ENCODE measurements at regions of chr19 and their contacts with region 1.

Region 1: DNA sequence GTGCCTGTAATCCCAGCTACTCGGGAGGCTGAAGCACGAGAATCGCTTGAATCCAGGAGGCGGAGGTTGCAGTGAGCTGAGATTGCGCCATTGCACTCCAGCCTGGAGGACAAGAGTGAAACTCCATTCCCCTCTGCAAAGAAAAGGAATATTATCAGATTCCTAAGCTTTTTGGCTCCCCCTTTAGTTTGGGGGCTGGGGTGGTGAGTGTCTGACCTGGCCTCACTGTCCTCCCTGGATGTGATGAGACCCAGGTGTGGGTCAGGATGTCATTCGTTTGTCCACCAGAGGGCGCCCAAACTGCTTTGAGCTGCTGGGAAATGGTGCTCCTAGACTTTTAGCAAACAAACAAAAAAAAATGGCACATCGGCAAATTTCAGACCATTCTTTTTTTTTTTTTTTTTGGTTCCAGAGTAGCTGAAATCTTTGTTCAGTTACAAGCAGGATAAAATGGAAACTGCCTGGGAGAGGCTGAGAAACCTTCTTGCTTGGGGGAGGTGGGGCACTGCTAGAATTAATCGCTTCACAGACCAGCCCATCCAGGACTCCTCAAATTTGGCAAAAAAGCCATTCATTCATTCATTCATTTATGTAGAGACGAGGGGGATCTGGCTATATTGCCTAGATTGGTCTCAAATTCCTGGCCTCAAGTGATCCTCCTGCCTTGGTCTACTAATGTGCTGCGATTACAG is 29.4 kb downstream of the SPC24 start:
- DNase-seq: peak in 1 of 2 experiments; percentile 91
- H3K4me3 ChIP-seq: no peak overlapping the region
- H3K27ac ChIP-seq: 0 out of 2 replicates have a peak overlapping the region, but pooled peaks have one; percentile 22
- H3K4me1 ChIP-seq: no peaks in the 10 kb centered on the region
- H3K27me3 ChIP-seq: no peaks in the 10 kb centered on the region
- CTCF ChIP-seq: peak; percentile 75 to 83 (median 81)
- EP300 ChIP-seq: no peak
- POLR2A ChIP-seq: no peak
- RAD21 ChIP-seq: peak; percentile 48 to 56

Region 2: GRCh38 chr19:11050323-11051114 is 75.6 kb before region 1 on chr19:
- CTCF ChIA-PET with region 1: no interaction called
- POLR2A ChIA-PET with region 1: no interaction called
- DNase-seq: no peak
- H3K4me3 ChIP-seq: no peak overlapping the region
- H3K27ac ChIP-seq: no peak overlapping the region
- H3K4me1 ChIP-seq: no peaks in the 10 kb centered on the region
- H3K27me3 ChIP-seq: no peaks in the 10 kb centered on the region; a peak in 1 of 7 replicates
- CTCF ChIP-seq: no peak
- EP300 ChIP-seq: no peak
- POLR2A ChIP-seq: no peak
- RAD21 ChIP-seq: no peak

Region 3: GRCh38 chr19:11106477-11106876 is 19.7 kb before region 1 on chr19:
- CTCF ChIA-PET with region 1: interaction called, 21 read pairs
- POLR2A ChIA-PET with region 1: no interaction called
- DNase-seq: no peak
- H3K4me3 ChIP-seq: no peak overlapping the region
- H3K27ac ChIP-seq: no peak overlapping the region
- H3K4me1 ChIP-seq: peaks cover 0 to 3% (median 0%) of the 10 kb centered on the region in 4 experiments; a peak in 1 of 7 replicates
- H3K27me3 ChIP-seq: no peaks in the 10 kb centered on the region
- CTCF ChIP-seq: no peak
- EP300 ChIP-seq: no peak
- POLR2A ChIP-seq: no peak
- RAD21 ChIP-seq: no peak

Region 4: DNA sequence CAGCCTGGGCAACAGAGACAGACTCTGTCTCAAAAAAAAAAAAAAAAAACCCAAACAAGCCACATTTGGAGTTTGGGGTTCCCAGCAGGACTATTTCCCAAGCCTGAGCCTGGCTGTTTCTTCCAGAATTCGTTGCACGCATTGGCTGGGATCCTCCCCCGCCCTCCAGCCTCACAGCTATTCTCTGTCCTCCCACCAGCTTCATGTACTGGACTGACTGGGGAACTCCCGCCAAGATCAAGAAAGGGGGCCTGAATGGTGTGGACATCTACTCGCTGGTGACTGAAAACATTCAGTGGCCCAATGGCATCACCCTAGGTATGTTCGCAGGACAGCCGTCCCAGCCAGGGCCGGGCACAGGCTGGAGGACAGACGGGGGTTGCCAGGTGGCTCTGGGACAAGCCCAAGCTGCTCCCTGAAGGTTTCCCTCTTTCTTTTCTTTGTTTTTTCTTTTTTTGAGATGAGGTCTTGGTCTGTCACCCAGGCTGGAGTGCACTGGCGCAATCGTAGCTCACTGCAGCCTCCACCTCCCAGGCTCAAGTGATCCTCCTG is 10.2 kb before region 1 on chr19:
- CTCF ChIA-PET with region 1: interaction called, 21 read pairs
- POLR2A ChIA-PET with region 1: no interaction called
- DNase-seq: no peak
- H3K4me3 ChIP-seq: no peak overlapping the region
- H3K27ac ChIP-seq: no peak overlapping the region
- H3K4me1 ChIP-seq: no peaks in the 10 kb centered on the region
- H3K27me3 ChIP-seq: no peaks in the 10 kb centered on the region
- CTCF ChIP-seq: no peak
- EP300 ChIP-seq: no peak
- POLR2A ChIP-seq: no peak
- RAD21 ChIP-seq: no peak

Region 5: DNA sequence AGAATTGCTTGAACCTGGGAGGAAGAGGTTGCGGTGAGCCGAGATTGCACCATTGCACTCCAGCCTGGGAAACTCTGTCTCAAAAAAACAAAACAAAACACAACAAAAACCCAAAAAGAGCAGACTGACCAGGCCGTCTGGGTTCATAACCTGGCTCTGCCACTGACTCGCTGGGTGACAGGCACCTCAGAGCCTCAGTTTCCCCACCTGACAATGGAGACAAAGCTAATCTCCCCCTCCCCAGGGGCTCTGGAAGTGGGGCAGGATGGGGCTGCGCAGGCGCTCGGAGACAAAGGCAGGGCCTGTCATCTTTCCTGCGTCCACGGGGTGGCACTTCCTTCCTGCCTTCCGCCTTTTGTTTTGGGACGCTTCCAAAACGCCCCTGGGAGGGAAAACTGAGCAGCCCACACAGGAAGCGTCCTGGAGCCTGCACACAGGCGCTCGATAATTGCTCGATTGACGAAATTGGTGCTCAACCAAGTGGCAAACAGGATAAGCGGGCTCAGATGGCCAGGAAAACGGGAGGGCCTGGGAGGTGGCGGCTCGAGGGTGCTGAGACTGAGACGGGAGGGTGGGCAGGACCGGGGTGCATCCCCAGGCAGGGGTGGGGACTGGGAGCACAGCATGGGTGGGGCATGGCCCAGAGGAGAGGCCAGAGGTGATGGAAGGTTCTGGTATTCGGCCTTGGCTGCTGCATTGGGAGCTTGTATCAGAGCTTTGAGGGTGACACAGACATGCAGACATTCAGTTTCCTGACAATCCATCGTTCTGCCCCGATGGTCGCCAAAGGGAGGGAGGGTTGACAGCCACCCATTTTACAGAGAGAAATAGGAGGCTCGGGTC is 11.6 kb after region 1 on chr19:
- CTCF ChIA-PET with region 1: interaction called, 16 read pairs
- POLR2A ChIA-PET with region 1: interaction called, 4 read pairs
- DNase-seq: peak in 1 of 2 experiments; percentile 79
- H3K4me3 ChIP-seq: peak overlapping the region; percentile 9 to 57 (median 28); a peak in 6 of 8 replicates
- H3K27ac ChIP-seq: no peak overlapping the region
- H3K4me1 ChIP-seq: peaks cover 0 to 17% (median 13%) of the 10 kb centered on the region in 4 experiments; a peak in 6 of 7 replicates
- H3K27me3 ChIP-seq: no peaks in the 10 kb centered on the region
- CTCF ChIP-seq: peak; percentile 62 to 71 (median 69)
- EP300 ChIP-seq: no peak
- POLR2A ChIP-seq: no peak
- RAD21 ChIP-seq: peak; percentile 74 to 76

Region 6: DNA sequence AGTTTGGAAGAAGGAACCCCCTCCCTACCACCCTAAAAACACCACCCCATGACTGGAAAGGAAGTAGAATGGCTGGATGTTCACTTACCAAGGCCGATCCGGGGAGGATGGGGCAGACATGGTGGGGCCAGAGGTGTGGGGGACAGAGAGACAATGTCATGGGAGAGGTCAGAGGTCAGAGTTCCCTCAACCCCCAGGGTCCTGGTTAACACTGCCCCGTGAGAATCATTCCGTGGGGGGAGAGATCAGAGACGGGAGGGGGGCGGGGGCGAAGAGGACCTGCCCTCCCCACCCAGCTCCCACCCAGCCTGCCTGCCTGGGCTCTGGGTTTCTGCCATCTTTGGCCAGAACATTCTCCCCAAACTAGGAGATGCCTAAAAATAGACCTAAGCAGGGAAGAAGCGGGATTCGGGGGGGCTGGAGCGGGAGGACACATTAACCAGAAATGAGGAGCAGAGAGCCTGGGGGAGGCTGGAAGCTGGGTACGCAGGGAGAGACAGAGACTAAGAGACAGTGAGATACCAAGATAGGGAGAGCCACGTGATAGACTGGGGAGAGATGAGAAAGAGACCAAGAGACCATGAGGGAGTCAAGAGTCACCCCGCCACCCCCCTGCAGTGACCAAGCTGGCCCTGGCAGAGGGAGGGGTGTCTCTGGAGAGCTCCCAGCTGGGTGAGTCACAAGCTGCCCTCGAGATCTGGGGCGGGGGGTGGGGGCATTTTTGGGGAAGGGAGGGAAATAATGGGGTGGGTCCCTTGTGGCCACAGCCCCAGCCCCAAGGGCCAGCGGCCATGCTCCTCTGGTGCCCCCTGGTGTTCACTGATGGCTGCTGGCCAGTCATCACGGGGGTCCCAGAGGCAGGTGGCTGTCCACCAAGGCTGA is 77.3 kb after region 1 on chr19:
- CTCF ChIA-PET with region 1: interaction called, 18 read pairs
- POLR2A ChIA-PET with region 1: interaction called, 3 read pairs
- DNase-seq: peak; percentile 46 to 88
- H3K4me3 ChIP-seq: no peak overlapping the region
- H3K27ac ChIP-seq: no peak overlapping the region
- H3K4me1 ChIP-seq: no peaks in the 10 kb centered on the region; a peak in 2 of 7 replicates
- H3K27me3 ChIP-seq: no peaks in the 10 kb centered on the region
- CTCF ChIP-seq: peak; percentile 74 to 94 (median 90)
- EP300 ChIP-seq: no peak
- POLR2A ChIP-seq: no peak
- RAD21 ChIP-seq: peak; percentile 79 to 82